ENCODE measurements at regions of chr1 and their contacts with region 1.

Region 1: GRCh38 chr1:87328272-87329050 is at the start of gene LMO4:
- DNase-seq: peak; percentile 96
- H3K4me3 ChIP-seq: peak within 1 kb of the TSS; percentile 75
- H3K27ac ChIP-seq: peak within 1 kb of the TSS; percentile 65
- H3K4me1 ChIP-seq: peaks cover 30% of the 10 kb centered on the region
- CTCF ChIP-seq: no peak
- total RNA-seq, gene LMO4: 14.5 and 19.9 TPM in 2 replicates

Region 2: GRCh38 chr1:86395771-86396497 is 932.5 kb before region 1 on chr1 and contains the start of gene ODF2L:
- CTCF ChIA-PET with region 1: no interaction called
- POLR2A ChIA-PET with region 1: no interaction called
- intact Hi-C with region 1: no loop called
- DNase-seq: peak; percentile 88
- H3K4me3 ChIP-seq: peak within 1 kb of the TSS; percentile 83
- H3K27ac ChIP-seq: peak within 1 kb of the TSS; percentile 74
- H3K4me1 ChIP-seq: peaks cover 28% of the 10 kb centered on the region
- CTCF ChIP-seq: no peak
- total RNA-seq, gene ODF2L: 24.7 and 26.2 TPM in 2 replicates

Region 3: DNA sequence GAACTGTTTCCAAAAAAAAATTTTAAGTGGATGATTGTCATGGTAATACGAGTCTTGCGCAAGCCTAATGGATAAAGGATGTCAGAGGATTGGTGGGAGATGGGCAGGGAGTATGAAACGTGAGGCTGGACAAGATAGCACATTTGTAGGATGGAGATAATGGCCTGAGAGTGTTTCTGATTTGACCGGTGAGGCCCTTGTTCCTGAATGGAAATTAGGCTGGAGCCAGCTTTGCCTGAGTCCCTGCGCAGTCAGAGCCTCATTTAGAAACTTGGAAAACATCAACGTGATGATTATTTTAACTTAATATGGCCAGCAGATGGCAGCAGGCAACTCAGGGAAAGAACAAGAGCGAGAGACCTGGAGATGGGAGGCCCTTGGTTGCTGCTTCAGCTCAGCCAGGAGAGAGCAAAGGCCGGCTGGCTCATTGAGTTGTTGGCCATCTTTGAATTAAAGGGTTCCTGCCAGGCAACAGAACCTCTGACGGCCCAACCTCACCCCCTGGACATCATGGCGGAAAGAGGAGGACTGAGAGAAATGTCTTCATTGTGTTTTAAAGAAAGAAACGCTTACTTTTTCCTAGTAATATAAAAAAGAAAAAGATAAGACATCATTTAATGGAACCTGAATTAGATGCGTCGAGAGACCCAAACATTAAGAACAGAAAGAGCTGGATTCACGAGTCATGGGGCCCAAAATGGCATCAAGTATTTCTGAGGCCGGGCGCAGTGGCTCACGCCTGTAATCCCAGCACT is 494.8 kb before region 1 on chr1:
- CTCF ChIA-PET with region 1: no interaction called
- POLR2A ChIA-PET with region 1: no interaction called
- intact Hi-C with region 1: loop called (anchors 10 kb)
- DNase-seq: peak; percentile 92
- H3K4me3 ChIP-seq: peak overlapping the region; percentile 73
- H3K27ac ChIP-seq: peak overlapping the region; percentile 66
- H3K4me1 ChIP-seq: peaks cover 35% of the 10 kb centered on the region
- CTCF ChIP-seq: peak; percentile 87

Region 4: DNA sequence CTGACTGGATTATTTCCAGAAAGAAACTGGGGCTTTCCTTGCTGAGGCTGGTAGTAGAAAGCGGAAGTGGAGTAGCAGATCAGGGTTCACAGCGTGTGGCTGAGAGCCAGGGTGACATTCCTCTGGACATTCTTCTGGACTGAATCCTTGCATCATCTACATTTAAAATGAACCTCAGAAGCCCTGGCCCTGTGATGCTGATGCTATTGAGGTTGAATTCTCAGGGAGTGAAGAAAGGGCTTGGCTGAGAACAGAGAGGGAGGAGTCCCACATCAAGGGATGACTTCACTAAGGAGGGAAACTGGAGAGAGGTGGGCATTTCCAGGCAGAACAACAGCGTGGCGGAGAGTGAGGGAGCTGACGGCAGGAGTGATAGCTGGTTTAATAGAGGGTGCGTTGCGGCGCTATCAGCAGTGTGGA is 102.1 kb before region 1 on chr1:
- CTCF ChIA-PET with region 1: no interaction called
- POLR2A ChIA-PET with region 1: no interaction called
- intact Hi-C with region 1: no loop called
- DNase-seq: no peak
- H3K4me3 ChIP-seq: no peak overlapping the region
- H3K27ac ChIP-seq: no peak overlapping the region
- H3K4me1 ChIP-seq: no peaks in the 10 kb centered on the region
- CTCF ChIP-seq: no peak

Region 5: GRCh38 chr1:87393445-87394085 is 65.1 kb after region 1 on chr1:
- CTCF ChIA-PET with region 1: no interaction called
- POLR2A ChIA-PET with region 1: no interaction called
- intact Hi-C with region 1: loop called (anchors 2 kb)
- DNase-seq: no peak
- H3K4me3 ChIP-seq: no peak overlapping the region
- H3K27ac ChIP-seq: no peak overlapping the region
- H3K4me1 ChIP-seq: no peaks in the 10 kb centered on the region
- CTCF ChIP-seq: no peak

Region 6: GRCh38 chr1:87449348-87449963 is 121.0 kb after region 1 on chr1:
- CTCF ChIA-PET with region 1: interaction called, 5 read pairs
- POLR2A ChIA-PET with region 1: interaction called, 11 read pairs
- intact Hi-C with region 1: loop called (anchors 1 kb)
- DNase-seq: peak; percentile 47
- H3K4me3 ChIP-seq: peak overlapping the region; percentile 20
- H3K27ac ChIP-seq: peak overlapping the region; percentile 10
- H3K4me1 ChIP-seq: peaks cover 10% of the 10 kb centered on the region
- CTCF ChIP-seq: no peak

Region 7: DNA sequence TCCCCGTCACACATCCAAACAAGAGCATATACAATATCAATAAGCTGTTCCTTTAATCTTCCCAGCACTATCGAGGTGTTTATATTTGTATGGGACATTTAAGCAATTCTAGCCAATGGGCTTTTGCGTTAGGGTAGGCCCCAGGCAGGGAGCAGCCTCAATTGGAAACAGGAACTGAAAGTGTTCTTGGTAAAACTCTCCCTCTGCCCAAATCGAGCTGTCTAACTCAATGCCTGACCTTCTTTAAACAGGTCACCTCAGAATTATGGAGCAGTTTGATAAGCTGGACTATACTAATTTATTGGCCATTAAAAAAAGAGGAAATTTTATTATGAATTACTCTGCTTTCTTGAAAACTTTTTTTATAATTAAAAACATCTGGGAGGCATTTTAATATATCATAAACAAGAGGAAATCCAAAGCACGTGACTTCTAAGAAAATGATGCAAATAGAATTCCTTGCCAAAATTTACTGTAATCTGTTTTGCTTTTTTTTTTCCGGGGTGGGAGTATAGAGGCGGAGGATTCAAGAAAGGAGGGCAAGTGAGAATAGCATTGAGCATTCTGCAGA is 498.3 kb after region 1 on chr1:
- CTCF ChIA-PET with region 1: no interaction called
- POLR2A ChIA-PET with region 1: no interaction called
- intact Hi-C with region 1: loop called (anchors 5 kb)
- DNase-seq: peak; percentile 75
- H3K4me3 ChIP-seq: no peak overlapping the region
- H3K27ac ChIP-seq: no peak overlapping the region
- H3K4me1 ChIP-seq: peaks cover 5% of the 10 kb centered on the region
- CTCF ChIP-seq: no peak

Region 8: GRCh38 chr1:87953732-87954344 is 625.4 kb after region 1 on chr1:
- CTCF ChIA-PET with region 1: no interaction called
- POLR2A ChIA-PET with region 1: no interaction called
- intact Hi-C with region 1: loop called (anchors 2 kb)
- DNase-seq: peak; percentile 57
- H3K4me3 ChIP-seq: no peak overlapping the region
- H3K27ac ChIP-seq: no peak overlapping the region
- H3K4me1 ChIP-seq: no peaks in the 10 kb centered on the region
- CTCF ChIP-seq: peak; percentile 90